Sciatic nerve (tissue), 2 donors: ENCODE measurements at regions of chr4 and their contacts with region 1.

Region 1: GRCh38 chr4:53886090-53886489 is 178.3 kb downstream of the CHIC2 start:
- DNase-seq: no peak
- ATAC-seq: peak; percentile 57

Region 2: GRCh38 chr4:53847965-53848364 is 38.1 kb before region 1 on chr4:
- intact Hi-C with region 1: loop called (anchors 2 kb)
- DNase-seq: no peak
- ATAC-seq: no peak

Region 3: GRCh38 chr4:53858744-53859143 is 27.3 kb before region 1 on chr4:
- intact Hi-C with region 1: no loop called
- DNase-seq: no peak
- ATAC-seq: no peak